HCT116 (cell line): ENCODE measurements at regions of chr1 and their contacts with region 1.

Region 1: GRCh38 chr1:205061665-205062069 is 18.7 kb downstream of the CNTN2 start:
- DNase-seq: peak; percentile 35
- ATAC-seq: peak; percentile 83
- H3K4me3 ChIP-seq: no peak overlapping the region
- H3K27ac ChIP-seq: no peak overlapping the region
- H3K4me1 ChIP-seq: no peaks in the 10 kb centered on the region; a peak in 1 of 4 replicates
- H3K27me3 ChIP-seq: no peaks in the 10 kb centered on the region
- CTCF ChIP-seq: peak; percentile 90 to 92 (median 92)
- POLR2A ChIP-seq: no peak
- RAD21 ChIP-seq: peak; percentile 89

Region 2: DNA sequence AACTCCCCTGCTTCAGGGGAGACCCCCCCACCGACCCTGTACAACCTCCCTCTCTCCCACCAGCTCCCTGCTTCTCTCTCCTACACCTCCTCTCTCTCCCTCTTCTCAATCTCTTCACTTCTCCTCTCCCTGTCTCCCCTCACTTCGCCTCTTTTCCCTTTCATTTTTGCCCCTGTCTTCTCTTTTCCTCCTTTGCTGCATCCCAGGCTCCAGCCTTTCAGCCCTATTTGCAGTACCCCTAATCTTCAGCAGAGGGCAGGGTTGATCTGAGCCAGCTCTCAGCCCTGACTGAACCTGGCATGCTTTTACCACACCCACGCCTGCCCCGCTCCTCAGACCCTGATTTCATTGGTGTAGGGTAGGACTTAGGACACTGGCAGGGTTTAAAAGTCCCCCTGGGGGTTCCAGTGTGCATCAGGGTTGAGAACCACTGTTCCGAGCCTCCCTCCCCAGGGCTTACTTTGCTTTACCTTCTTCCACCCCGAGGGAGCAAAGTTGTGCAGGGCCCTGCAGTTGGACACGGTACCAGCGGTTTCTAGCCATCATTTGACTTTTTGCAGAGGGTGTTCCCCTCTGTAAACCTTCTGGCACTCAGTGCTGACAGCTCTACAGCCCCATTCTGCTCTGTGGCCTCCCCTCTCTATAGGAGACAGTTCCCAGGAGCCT is 86.0 kb before region 1 on chr1:
- CTCF ChIA-PET with region 1: interaction called, 21 read pairs
- POLR2A ChIA-PET with region 1: interaction called, 5 read pairs
- RAD21 ChIA-PET with region 1: interaction called, 3 read pairs
- intact Hi-C with region 1: no loop called
- DNase-seq: peak; percentile 27
- ATAC-seq: peak; percentile 93
- H3K4me3 ChIP-seq: no peak overlapping the region
- H3K27ac ChIP-seq: no peak overlapping the region
- H3K4me1 ChIP-seq: peaks cover 3 to 11% of the 10 kb centered on the region in 2 experiments; a peak in 3 of 4 replicates
- H3K27me3 ChIP-seq: peaks cover 14% of the 10 kb centered on the region; the same call in 1 of the 2 replicates
- CTCF ChIP-seq: peak; percentile 77 to 91 (median 85)
- POLR2A ChIP-seq: no peak
- RAD21 ChIP-seq: peak; percentile 82

Region 3: GRCh38 chr1:204989266-204990058 is 72.2 kb before region 1 on chr1:
- CTCF ChIA-PET with region 1: interaction called, 205 read pairs
- POLR2A ChIA-PET with region 1: interaction called, 7 read pairs
- RAD21 ChIA-PET with region 1: interaction called, 30 to 33 read pairs
- intact Hi-C with region 1: loop called (anchors 1 kb)
- DNase-seq: peak; percentile 45
- ATAC-seq: peak; percentile 98
- H3K4me3 ChIP-seq: no peak overlapping the region
- H3K27ac ChIP-seq: no peak overlapping the region
- H3K4me1 ChIP-seq: no peaks in the 10 kb centered on the region
- H3K27me3 ChIP-seq: peaks cover 16% of the 10 kb centered on the region; the same call in 1 of the 2 replicates
- CTCF ChIP-seq: peak; percentile 96 to 99 (median 99)
- POLR2A ChIP-seq: no peak
- RAD21 ChIP-seq: peak; percentile 98

Region 4: DNA sequence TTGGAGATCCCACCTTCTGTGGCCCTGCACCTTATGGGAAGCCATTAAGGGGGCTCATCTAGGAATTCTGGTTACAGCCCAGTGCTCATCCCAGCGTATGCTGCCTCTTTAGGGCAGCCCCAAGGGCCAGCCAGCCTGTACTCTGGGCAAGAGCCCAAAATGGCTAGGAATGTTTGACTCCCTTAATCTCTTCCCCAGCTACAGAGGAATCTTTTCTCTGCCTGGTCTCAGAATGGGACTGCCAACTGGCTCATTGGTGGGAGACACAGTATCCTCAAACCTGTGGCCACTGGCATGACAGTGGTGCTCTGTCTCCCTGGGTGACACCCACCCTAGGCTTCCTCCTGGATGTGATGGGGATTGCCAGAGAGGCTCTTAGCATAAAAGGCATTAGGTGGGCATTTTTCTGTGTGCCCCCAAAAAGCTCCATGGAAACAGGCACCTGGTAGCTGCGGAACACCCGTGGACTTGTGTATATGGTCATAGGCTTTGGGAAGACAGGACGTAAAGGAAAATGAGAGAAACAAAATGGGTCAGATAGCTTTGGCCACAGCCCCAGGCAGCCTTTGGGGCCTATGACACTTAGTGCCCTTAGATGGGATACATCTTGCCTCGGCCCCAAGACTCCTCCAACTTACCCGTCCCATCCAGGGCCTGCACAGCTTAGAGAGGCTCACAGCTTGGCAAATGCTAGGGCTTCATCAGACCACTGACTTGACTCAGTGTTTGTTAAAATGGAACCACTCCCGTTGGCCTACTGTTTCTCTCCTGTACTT is 15.7 kb after region 1 on chr1:
- CTCF ChIA-PET with region 1: interaction called, 20 read pairs
- POLR2A ChIA-PET with region 1: no interaction called
- RAD21 ChIA-PET with region 1: no interaction called
- intact Hi-C with region 1: no loop called
- DNase-seq: no peak
- ATAC-seq: no peak
- H3K4me3 ChIP-seq: no peak overlapping the region
- H3K27ac ChIP-seq: no peak overlapping the region
- H3K4me1 ChIP-seq: no peaks in the 10 kb centered on the region
- H3K27me3 ChIP-seq: no peaks in the 10 kb centered on the region
- CTCF ChIP-seq: no peak
- POLR2A ChIP-seq: no peak
- RAD21 ChIP-seq: no peak

Region 5: DNA sequence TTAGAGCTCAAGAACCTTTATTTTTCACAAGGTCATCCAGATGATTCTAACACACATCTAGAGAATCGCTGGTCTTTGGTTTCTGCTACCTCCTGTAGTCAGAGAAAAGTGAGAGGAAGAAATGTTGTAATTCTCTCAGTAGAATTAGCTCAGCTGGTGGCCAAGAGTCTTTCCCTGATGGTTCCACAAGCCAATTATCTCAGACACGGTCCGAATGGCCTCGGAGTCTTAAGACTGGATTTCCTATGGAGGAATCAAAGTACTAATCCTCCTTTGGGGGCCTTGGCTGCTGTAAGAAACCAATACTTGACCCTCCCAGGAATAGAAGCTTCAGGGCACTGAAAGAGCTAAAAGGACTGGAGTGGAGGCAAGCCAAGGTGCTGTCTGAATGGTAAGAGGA is 20.8 kb after region 1 on chr1:
- CTCF ChIA-PET with region 1: interaction called, 18 read pairs
- POLR2A ChIA-PET with region 1: no interaction called
- RAD21 ChIA-PET with region 1: no interaction called
- intact Hi-C with region 1: no loop called
- DNase-seq: no peak
- ATAC-seq: no peak
- H3K4me3 ChIP-seq: no peak overlapping the region
- H3K27ac ChIP-seq: no peak overlapping the region
- H3K4me1 ChIP-seq: no peaks in the 10 kb centered on the region
- H3K27me3 ChIP-seq: no peaks in the 10 kb centered on the region
- CTCF ChIP-seq: no peak
- POLR2A ChIP-seq: no peak
- RAD21 ChIP-seq: no peak

Region 6: GRCh38 chr1:205477759-205478247 is 416.1 kb after region 1 on chr1:
- CTCF ChIA-PET with region 1: no interaction called
- POLR2A ChIA-PET with region 1: no interaction called
- RAD21 ChIA-PET with region 1: no interaction called
- intact Hi-C with region 1: no loop called
- DNase-seq: peak; percentile 59
- ATAC-seq: peak; percentile 70
- H3K4me3 ChIP-seq: no peak overlapping the region; a peak in 1 of 4 replicates
- H3K27ac ChIP-seq: 0 out of 2 replicates have a peak overlapping the region, but pooled peaks have one; percentile 9
- H3K4me1 ChIP-seq: peaks cover 10 to 15% of the 10 kb centered on the region in 2 experiments
- H3K27me3 ChIP-seq: peaks cover 2% of the 10 kb centered on the region; the same call in 1 of the 2 replicates
- CTCF ChIP-seq: no peak
- POLR2A ChIP-seq: no peak
- RAD21 ChIP-seq: no peak